CD8-positive, alpha-beta T cell (primary cell): ENCODE measurements at regions of chr7 and their contacts with region 1.

Region 1: GRCh38 chr7:87219545-87220025 is at the start of gene TMEM243:
- DNase-seq: peak; percentile 67 to 93 (median 86)
- ATAC-seq: peak; percentile 69
- H3K4me3 ChIP-seq: peak within 1 kb of the TSS; percentile 86 to 94
- H3K4me3 Mint-ChIP-seq: peak within 1 kb of the TSS; percentile 99
- H3K27ac ChIP-seq: peak within 1 kb of the TSS; percentile 90 to 94
- H3K27ac Mint-ChIP-seq: peak within 1 kb of the TSS; percentile 99
- H3K4me1 ChIP-seq: peaks cover 36% of the 10 kb centered on the region
- H3K4me1 Mint-ChIP-seq: peaks cover 38% of the 10 kb centered on the region
- H3K27me3 ChIP-seq: no peaks in the 10 kb centered on the region
- H3K27me3 Mint-ChIP-seq: no peaks in the 10 kb centered on the region
- CTCF ChIP-seq: peak; percentile 39
- total RNA-seq, gene TMEM243: 122 to 124 TPM

Region 2: GRCh38 chr7:87152107-87152844 is 67.3 kb before region 1 on chr7 and contains the start of gene DMTF1:
- CTCF ChIA-PET with region 1: interaction called, 26 read pairs
- POLR2A ChIA-PET with region 1: interaction called, 112 read pairs
- intact Hi-C with region 1: loop called (anchors 1 kb)
- DNase-seq: peak; percentile 67 to 94 (median 87)
- ATAC-seq: peak; percentile 75
- H3K4me3 ChIP-seq: peak within 1 kb of the TSS; percentile 63 to 85
- H3K4me3 Mint-ChIP-seq: peak within 1 kb of the TSS; percentile 99
- H3K27ac ChIP-seq: peak within 1 kb of the TSS; percentile 92 to 97
- H3K27ac Mint-ChIP-seq: peak within 1 kb of the TSS; percentile 97
- H3K4me1 ChIP-seq: peaks cover 42% of the 10 kb centered on the region
- H3K4me1 Mint-ChIP-seq: peaks cover 48% of the 10 kb centered on the region
- H3K27me3 ChIP-seq: no peaks in the 10 kb centered on the region
- H3K27me3 Mint-ChIP-seq: no peaks in the 10 kb centered on the region
- CTCF ChIP-seq: no peak
- total RNA-seq, gene DMTF1: 97.9 to 103 TPM

Region 3: DNA sequence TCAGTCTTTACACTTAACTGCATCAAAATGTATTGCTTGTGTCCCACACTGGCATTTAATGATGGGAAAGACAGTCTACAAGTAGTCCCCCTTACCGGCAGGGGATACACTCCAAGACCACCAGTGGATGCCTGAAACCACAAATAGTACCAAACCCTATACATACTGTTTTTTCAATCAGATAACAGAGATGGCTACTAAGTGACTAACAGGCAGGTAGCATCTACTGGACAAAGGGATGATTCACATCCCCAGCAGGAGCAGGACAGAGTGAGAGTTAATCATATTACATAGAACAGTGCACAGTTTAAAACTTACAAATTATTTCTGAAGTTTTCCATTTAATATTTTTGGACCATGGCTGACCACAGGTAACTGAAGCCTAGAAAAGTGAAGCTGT is 13.2 kb before region 1 on chr7:
- CTCF ChIA-PET with region 1: interaction called, 5 read pairs
- POLR2A ChIA-PET with region 1: interaction called, 28 read pairs
- intact Hi-C with region 1: loop called in 1 of 2 experiments (anchors 2 kb)
- DNase-seq: no peak
- ATAC-seq: no peak
- H3K4me3 ChIP-seq: no peak overlapping the region
- H3K4me3 Mint-ChIP-seq: no peak overlapping the region
- H3K27ac ChIP-seq: no peak overlapping the region
- H3K27ac Mint-ChIP-seq: no peak overlapping the region
- H3K4me1 ChIP-seq: peaks cover 50% of the 10 kb centered on the region
- H3K4me1 Mint-ChIP-seq: peaks cover 75% of the 10 kb centered on the region
- H3K27me3 ChIP-seq: no peaks in the 10 kb centered on the region
- H3K27me3 Mint-ChIP-seq: no peaks in the 10 kb centered on the region
- CTCF ChIP-seq: no peak

Region 4: DNA sequence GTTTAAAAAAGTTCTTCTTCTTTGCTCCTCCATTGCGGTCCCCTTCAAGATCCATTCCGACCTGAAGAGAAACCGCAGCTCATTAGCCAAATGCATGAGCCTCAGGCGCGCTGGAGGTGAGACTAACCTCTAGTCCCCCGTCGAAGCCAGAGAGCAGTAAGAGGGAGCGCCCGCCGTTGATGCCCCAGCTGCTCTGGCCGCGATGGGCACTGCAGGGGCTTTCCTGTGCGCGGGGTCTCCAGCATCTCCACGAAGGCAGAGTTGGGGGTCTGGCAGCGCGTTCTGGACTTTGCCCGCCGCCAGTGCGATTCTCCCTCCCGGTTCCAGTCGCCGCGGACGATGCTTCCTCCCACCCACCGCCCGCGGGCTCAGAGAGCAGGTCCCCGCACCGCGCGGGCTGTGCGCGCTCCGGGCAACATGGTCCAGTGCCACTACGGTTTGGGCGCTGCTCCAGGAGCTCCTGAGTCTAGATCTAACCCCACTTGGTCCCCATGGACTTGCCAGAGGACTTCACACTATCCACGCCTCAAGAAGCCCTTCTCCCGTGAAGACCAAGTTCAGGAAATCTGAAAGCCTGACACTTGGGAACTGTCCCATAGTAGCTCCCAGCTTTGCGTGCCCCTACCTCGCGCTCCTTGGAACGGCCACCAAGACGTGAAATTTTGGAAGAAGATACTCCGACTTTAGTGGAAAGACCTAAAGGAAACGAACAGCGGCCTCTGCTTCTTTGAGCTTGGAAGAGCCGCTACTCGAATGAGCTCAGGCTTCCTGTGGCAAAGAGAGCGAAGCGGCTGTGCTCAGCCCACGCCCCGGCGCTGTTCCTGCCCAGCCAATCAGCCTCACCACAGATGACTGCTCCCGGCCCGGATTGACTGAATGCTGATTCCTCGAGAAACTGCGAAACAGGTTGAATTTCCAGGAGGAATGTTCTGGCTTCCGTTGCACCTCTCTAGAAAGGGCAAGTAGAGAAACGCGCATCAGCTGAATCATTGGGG is 380.8 kb after region 1 on chr7 and contains the start of gene ABCB1:
- CTCF ChIA-PET with region 1: no interaction called
- POLR2A ChIA-PET with region 1: interaction called, 7 read pairs
- intact Hi-C with region 1: loop called in 1 of 2 experiments (anchors 10 kb)
- DNase-seq: peak; percentile 12 to 76 (median 60)
- ATAC-seq: peak; percentile 88
- H3K4me3 ChIP-seq: peak within 1 kb of the TSS; percentile 83 to 89
- H3K4me3 Mint-ChIP-seq: peak within 1 kb of the TSS; percentile 83
- H3K27ac ChIP-seq: peak within 1 kb of the TSS; percentile 71 to 77
- H3K27ac Mint-ChIP-seq: peak within 1 kb of the TSS; percentile 92
- H3K4me1 ChIP-seq: peaks cover 20% of the 10 kb centered on the region
- H3K4me1 Mint-ChIP-seq: peaks cover 36% of the 10 kb centered on the region
- H3K27me3 ChIP-seq: peaks cover 0 to 2% of the 10 kb centered on the region in 2 experiments
- H3K27me3 Mint-ChIP-seq: peaks cover 3% of the 10 kb centered on the region
- CTCF ChIP-seq: no peak
- total RNA-seq, gene ABCB1: 38.4 to 40.0 TPM

Region 5: GRCh38 chr7:87876040-87876868 is 656.7 kb after region 1 on chr7 and contains the starts of genes DBF4 and SLC25A40:
- CTCF ChIA-PET with region 1: no interaction called
- POLR2A ChIA-PET with region 1: interaction called, 4 read pairs
- intact Hi-C with region 1: loop called (anchors 5 to 10 kb)
- DNase-seq: peak; percentile 87 to 98 (median 95)
- ATAC-seq: peak; percentile 90
- H3K4me3 ChIP-seq: peak within 1 kb of the TSS; percentile 85 to 91
- H3K4me3 Mint-ChIP-seq: peak within 1 kb of the TSS; percentile 94
- H3K27ac ChIP-seq: peak within 1 kb of the TSS; percentile 93 to 95
- H3K27ac Mint-ChIP-seq: peak within 1 kb of the TSS; percentile 97
- H3K4me1 ChIP-seq: peaks cover 31% of the 10 kb centered on the region
- H3K4me1 Mint-ChIP-seq: peaks cover 57% of the 10 kb centered on the region
- H3K27me3 ChIP-seq: no peaks in the 10 kb centered on the region
- H3K27me3 Mint-ChIP-seq: no peaks in the 10 kb centered on the region
- CTCF ChIP-seq: no peak
- total RNA-seq, gene DBF4: 75.6 to 81.6 TPM
- total RNA-seq, gene SLC25A40: 6.2 to 6.9 TPM